ENCODE measurements at regions of chr4 and their contacts with region 1.

Region 1: GRCh38 chr4:36187723-36188333 is 56.5 kb downstream of the ARAP2 start:
- DNase-seq: peak in 1 of 2 donors; percentile 56
- ATAC-seq: no peak
- H3K4me3 ChIP-seq: no peak overlapping the region
- H3K4me3 Mint-ChIP-seq: no peak overlapping the region
- H3K27ac ChIP-seq: peak overlapping the region; percentile 10
- H3K27ac Mint-ChIP-seq: peak overlapping the region; percentile 81 to 87
- H3K4me1 ChIP-seq: peaks cover 15% of the 10 kb centered on the region
- H3K4me1 Mint-ChIP-seq: peaks cover 50 to 54% of the 10 kb centered on the region in 2 donors
- H3K27me3 ChIP-seq: no peaks in the 10 kb centered on the region
- H3K27me3 Mint-ChIP-seq: no peaks in the 10 kb centered on the region
- CTCF ChIP-seq: peak; percentile 84

Region 2: DNA sequence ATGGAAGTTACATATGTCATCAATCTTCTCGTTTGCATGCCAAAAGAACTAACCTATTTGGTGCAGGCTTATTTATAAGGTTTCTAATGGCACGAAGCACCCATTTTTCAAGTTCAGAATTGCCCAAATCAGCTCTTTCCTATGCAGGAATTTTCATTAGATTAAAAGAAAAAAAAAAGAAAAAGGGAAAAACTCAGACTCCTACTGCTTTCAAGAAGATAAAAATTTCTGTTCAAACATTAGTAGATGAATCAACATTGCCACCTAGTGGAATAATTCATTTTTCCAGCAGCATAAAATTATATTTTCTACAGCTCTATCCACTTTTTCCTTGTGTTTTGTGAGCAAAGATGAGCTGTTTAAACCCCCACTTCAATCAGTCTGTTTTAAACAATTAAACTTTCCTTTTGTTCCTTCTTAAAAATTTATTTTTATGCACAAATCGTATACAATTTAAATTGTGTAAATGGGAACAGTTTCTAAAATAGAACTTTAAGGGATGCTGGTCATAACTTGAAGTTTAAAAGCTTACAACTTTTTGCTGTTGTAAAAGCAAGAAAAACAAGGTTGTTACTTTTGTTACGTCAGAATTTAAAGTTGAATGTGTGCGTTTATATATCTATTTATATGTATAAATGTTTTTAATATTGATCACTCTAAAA is 253.4 kb before region 1 on chr4:
- intact Hi-C with region 1: loop called (anchors 10 kb)
- DNase-seq: peak in 1 of 2 donors; percentile 27
- ATAC-seq: no peak
- H3K4me3 ChIP-seq: no peak overlapping the region
- H3K4me3 Mint-ChIP-seq: no peak overlapping the region
- H3K27ac ChIP-seq: no peak overlapping the region
- H3K27ac Mint-ChIP-seq: no peak overlapping the region
- H3K4me1 ChIP-seq: no peaks in the 10 kb centered on the region
- H3K4me1 Mint-ChIP-seq: no peaks in the 10 kb centered on the region
- H3K27me3 ChIP-seq: peaks cover 2% of the 10 kb centered on the region
- H3K27me3 Mint-ChIP-seq: peaks cover 0 to 3% of the 10 kb centered on the region in 2 donors
- CTCF ChIP-seq: peak; percentile 63

Region 3: DNA sequence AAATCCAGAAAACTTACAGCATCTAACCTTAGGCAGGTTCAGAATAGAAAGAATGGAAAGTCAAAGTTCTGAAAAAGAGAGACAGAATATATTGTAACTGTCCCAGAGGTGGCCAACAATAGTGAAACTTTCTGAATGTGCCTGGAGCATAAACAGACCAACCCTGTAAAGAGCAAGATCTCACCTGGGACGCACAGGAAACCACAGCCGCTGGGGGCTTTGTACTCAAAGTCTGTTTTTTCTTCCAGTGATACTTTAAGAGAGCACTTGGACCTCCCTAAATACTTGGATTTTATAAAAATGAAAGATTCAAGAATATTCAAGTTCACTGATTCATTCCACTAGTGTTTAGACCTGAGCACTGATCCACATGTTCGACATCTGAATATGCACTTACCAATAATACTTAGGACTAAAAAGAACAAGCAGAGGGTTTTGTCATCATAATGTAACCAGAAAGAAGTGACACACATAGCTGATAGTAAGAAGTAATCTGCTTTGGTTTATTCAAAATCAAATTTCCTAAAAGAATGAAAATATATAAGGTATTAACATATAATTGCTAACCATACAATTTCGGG is 21.2 kb after region 1 on chr4:
- intact Hi-C with region 1: loop called (anchors 1 kb)
- DNase-seq: peak in 1 of 2 donors; percentile 69
- ATAC-seq: peak; percentile 73 to 87 (median 79)
- H3K4me3 ChIP-seq: no peak overlapping the region
- H3K4me3 Mint-ChIP-seq: peak overlapping the region; percentile 68
- H3K27ac ChIP-seq: peak overlapping the region; percentile 27
- H3K27ac Mint-ChIP-seq: peak overlapping the region; percentile 80 to 86
- H3K4me1 ChIP-seq: peaks cover 16% of the 10 kb centered on the region
- H3K4me1 Mint-ChIP-seq: peaks cover 54 to 56% of the 10 kb centered on the region in 2 donors
- H3K27me3 ChIP-seq: no peaks in the 10 kb centered on the region
- H3K27me3 Mint-ChIP-seq: no peaks in the 10 kb centered on the region
- CTCF ChIP-seq: no peak

Region 4: DNA sequence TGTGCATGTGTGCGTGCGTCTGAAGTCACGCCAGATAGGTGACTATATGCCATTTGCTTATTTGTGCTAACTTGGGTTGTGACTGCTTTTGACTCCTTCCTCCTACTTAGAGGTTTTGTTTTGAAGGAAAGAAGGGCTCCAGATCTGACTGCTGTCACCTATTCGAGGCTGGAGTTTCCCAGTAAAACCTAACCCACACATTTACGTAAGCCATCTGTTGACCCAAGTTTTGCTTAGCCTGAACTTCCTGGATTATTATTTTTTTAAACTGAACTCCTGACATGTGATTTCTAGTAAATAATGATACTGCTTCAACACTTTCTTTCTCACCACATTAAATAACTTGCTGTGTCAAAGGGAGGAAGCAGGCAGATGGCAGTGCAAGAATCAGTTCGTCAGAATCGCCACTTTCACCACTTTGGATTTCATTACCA is 135.1 kb after region 1 on chr4:
- intact Hi-C with region 1: loop called (anchors 5 kb)
- DNase-seq: peak in 1 of 2 donors; percentile 88
- ATAC-seq: peak; percentile 77 to 86 (median 83)
- H3K4me3 ChIP-seq: no peak overlapping the region
- H3K4me3 Mint-ChIP-seq: peak overlapping the region; percentile 67
- H3K27ac ChIP-seq: peak overlapping the region; percentile 58
- H3K27ac Mint-ChIP-seq: peak overlapping the region; percentile 17 to 39
- H3K4me1 ChIP-seq: peaks cover 22% of the 10 kb centered on the region
- H3K4me1 Mint-ChIP-seq: peaks cover 68 to 71% of the 10 kb centered on the region in 2 donors
- H3K27me3 ChIP-seq: no peaks in the 10 kb centered on the region
- H3K27me3 Mint-ChIP-seq: no peaks in the 10 kb centered on the region
- CTCF ChIP-seq: no peak

Measured in natural killer cell (primary cell).